Mammary epithelial cell (primary cell): ENCODE measurements at regions of chr2 and their contacts with region 1.

Region 1: DNA sequence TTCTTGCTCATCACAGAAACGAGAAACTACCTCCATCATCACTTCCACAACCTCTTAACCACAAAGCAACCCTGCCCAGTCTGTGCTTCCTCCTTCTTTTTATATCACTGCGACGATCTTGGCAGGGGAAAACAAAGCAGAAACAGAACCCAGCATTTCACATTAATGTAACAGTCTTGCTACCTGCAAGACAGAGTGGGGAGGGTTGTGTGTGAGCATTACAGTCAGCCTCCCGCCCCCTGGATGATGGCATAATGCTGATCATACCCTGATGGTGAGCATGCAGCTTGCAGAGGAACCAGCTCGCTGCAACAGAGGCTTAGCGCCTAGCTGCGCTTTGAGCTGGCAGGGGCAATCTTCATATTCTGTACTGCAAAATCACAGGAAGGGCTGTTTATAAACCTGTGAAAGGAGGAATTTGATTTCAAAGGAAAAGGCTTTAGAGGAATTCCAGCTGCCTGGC is 376.1 kb downstream of the IRS1 start:
- DNase-seq: peak; percentile 82
- H3K4me3 ChIP-seq: no peak overlapping the region
- H3K27ac ChIP-seq: no peak overlapping the region
- H3K4me1 ChIP-seq: peaks cover 45% of the 10 kb centered on the region
- H3K27me3 ChIP-seq: no peaks in the 10 kb centered on the region
- CTCF ChIP-seq: no peak

Region 2: GRCh38 chr2:225889446-225889850 is 534.1 kb before region 1 on chr2:
- CTCF ChIA-PET with region 1: no interaction called
- dilution Hi-C with region 1: no loop called
- in situ Hi-C with region 1: no loop called
- intact Hi-C with region 1: loop called (anchors 2 kb)
- DNase-seq: peak; percentile 73
- H3K4me3 ChIP-seq: no peak overlapping the region
- H3K27ac ChIP-seq: peak overlapping the region; percentile 45
- H3K4me1 ChIP-seq: peaks cover 4% of the 10 kb centered on the region
- H3K27me3 ChIP-seq: no peaks in the 10 kb centered on the region
- CTCF ChIP-seq: peak; percentile 60 to 80

Region 3: GRCh38 chr2:226411727-226412360 is 11.7 kb before region 1 on chr2:
- CTCF ChIA-PET with region 1: interaction called, 3 read pairs
- dilution Hi-C with region 1: no loop called
- in situ Hi-C with region 1: no loop called
- intact Hi-C with region 1: loop called (anchors 1 kb)
- DNase-seq: peak; percentile 93
- H3K4me3 ChIP-seq: no peak overlapping the region
- H3K27ac ChIP-seq: peak overlapping the region; percentile 81
- H3K4me1 ChIP-seq: peaks cover 19% of the 10 kb centered on the region
- H3K27me3 ChIP-seq: no peaks in the 10 kb centered on the region
- CTCF ChIP-seq: no peak

Region 4: GRCh38 chr2:226440127-226440918 is 16.8 kb after region 1 on chr2:
- CTCF ChIA-PET with region 1: no interaction called
- dilution Hi-C with region 1: no loop called
- in situ Hi-C with region 1: no loop called
- intact Hi-C with region 1: no loop called
- DNase-seq: no peak
- H3K4me3 ChIP-seq: no peak overlapping the region
- H3K27ac ChIP-seq: no peak overlapping the region
- H3K4me1 ChIP-seq: no peaks in the 10 kb centered on the region
- H3K27me3 ChIP-seq: no peaks in the 10 kb centered on the region
- CTCF ChIP-seq: no peak

Region 5: GRCh38 chr2:226540204-226540994 is 116.9 kb after region 1 on chr2:
- CTCF ChIA-PET with region 1: no interaction called
- dilution Hi-C with region 1: no loop called
- in situ Hi-C with region 1: no loop called
- intact Hi-C with region 1: no loop called
- DNase-seq: no peak
- H3K4me3 ChIP-seq: no peak overlapping the region
- H3K27ac ChIP-seq: no peak overlapping the region
- H3K4me1 ChIP-seq: no peaks in the 10 kb centered on the region
- H3K27me3 ChIP-seq: no peaks in the 10 kb centered on the region
- CTCF ChIP-seq: no peak

Region 6: DNA sequence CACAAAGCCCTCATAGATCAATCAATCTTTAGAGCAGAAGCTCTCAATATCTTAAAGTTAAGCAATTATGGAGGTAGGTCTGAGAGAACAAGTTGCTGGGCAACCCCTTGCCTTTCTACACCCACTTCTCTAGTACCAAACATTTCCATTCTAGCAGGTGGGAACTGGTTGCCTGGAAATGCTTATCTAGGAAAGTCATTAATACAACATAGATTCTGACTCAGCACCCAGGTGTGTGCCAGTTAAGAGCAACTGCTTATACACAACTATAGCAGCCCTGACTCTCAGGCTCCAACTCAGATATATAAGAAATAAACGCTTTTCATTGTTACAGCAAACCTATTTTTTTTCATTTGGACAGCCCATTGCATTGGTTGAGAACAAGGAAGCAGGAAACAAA is 138.4 kb after region 1 on chr2:
- CTCF ChIA-PET with region 1: no interaction called
- dilution Hi-C with region 1: no loop called
- in situ Hi-C with region 1: no loop called
- intact Hi-C with region 1: loop called (anchors 10 kb)
- DNase-seq: peak; percentile 90
- H3K4me3 ChIP-seq: no peak overlapping the region
- H3K27ac ChIP-seq: peak overlapping the region; percentile 40
- H3K4me1 ChIP-seq: peaks cover 23% of the 10 kb centered on the region
- H3K27me3 ChIP-seq: no peaks in the 10 kb centered on the region
- CTCF ChIP-seq: no peak

Region 7: GRCh38 chr2:226760412-226761194 is 337.1 kb after region 1 on chr2:
- CTCF ChIA-PET with region 1: no interaction called
- dilution Hi-C with region 1: no loop called
- in situ Hi-C with region 1: no loop called
- intact Hi-C with region 1: loop called (anchors 5 kb)
- DNase-seq: peak; percentile 57
- H3K4me3 ChIP-seq: no peak overlapping the region
- H3K27ac ChIP-seq: no peak overlapping the region
- H3K4me1 ChIP-seq: peaks cover 51% of the 10 kb centered on the region
- H3K27me3 ChIP-seq: no peaks in the 10 kb centered on the region
- CTCF ChIP-seq: no peak